Activated naive CD4-positive, alpha-beta T cell treated with anti-CD3 and anti-CD28 coated beads, Interleukin-2, amount 10 ng/mL, durations not matched to agents 7 days and 5 days (primary cell): ENCODE measurements at regions of chr13 and their contacts with region 1.

Region 1: GRCh38 chr13:40069173-40070044 is 413.9 kb downstream of the COG6 start:
- DNase-seq: peak; percentile 79
- H3K4me3 Mint-ChIP-seq: no peak overlapping the region
- H3K27ac Mint-ChIP-seq: peak overlapping the region; percentile 1
- H3K4me1 Mint-ChIP-seq: peaks cover 23% of the 10 kb centered on the region
- H3K27me3 Mint-ChIP-seq: no peaks in the 10 kb centered on the region

Region 2: GRCh38 chr13:40083841-40084240 is 14.4 kb after region 1 on chr13:
- CTCF ChIA-PET with region 1: interaction called, 12 read pairs
- DNase-seq: no peak
- H3K4me3 Mint-ChIP-seq: no peak overlapping the region
- H3K27ac Mint-ChIP-seq: no peak overlapping the region
- H3K4me1 Mint-ChIP-seq: no peaks in the 10 kb centered on the region
- H3K27me3 Mint-ChIP-seq: no peaks in the 10 kb centered on the region

Region 3: GRCh38 chr13:40146611-40147117 is 77.3 kb after region 1 on chr13:
- CTCF ChIA-PET with region 1: interaction called, 12 read pairs
- DNase-seq: peak; percentile 33
- H3K4me3 Mint-ChIP-seq: no peak overlapping the region
- H3K27ac Mint-ChIP-seq: no peak overlapping the region
- H3K4me1 Mint-ChIP-seq: peaks cover 46% of the 10 kb centered on the region
- H3K27me3 Mint-ChIP-seq: no peaks in the 10 kb centered on the region